Activated B cell treated with CpG ODN at 0.5 μM for 24 hours (primary cell): ENCODE measurements at regions of chr4 and their contacts with region 1.

Region 1: GRCh38 chr4:6986781-6987587 is 56.2 kb upstream of the TADA2B start:
- DNase-seq: peak; percentile 90
- ATAC-seq: peak; percentile 92
- H3K4me3 Mint-ChIP-seq: peak overlapping the region; percentile 94
- H3K27ac Mint-ChIP-seq: peak overlapping the region; percentile 98
- H3K4me1 Mint-ChIP-seq: peaks cover 74% of the 10 kb centered on the region
- H3K27me3 Mint-ChIP-seq: no peaks in the 10 kb centered on the region
- CTCF ChIP-seq: no peak

Region 2: GRCh38 chr4:5588046-5588445 is 1398.9 kb before region 1 on chr4:
- CTCF ChIA-PET with region 1: no interaction called
- POLR2A ChIA-PET with region 1: no interaction called
- intact Hi-C with region 1: no loop called
- DNase-seq: no peak
- ATAC-seq: no peak
- H3K4me3 Mint-ChIP-seq: no peak overlapping the region
- H3K27ac Mint-ChIP-seq: no peak overlapping the region
- H3K4me1 Mint-ChIP-seq: no peaks in the 10 kb centered on the region
- H3K27me3 Mint-ChIP-seq: no peaks in the 10 kb centered on the region
- CTCF ChIP-seq: no peak

Region 3: DNA sequence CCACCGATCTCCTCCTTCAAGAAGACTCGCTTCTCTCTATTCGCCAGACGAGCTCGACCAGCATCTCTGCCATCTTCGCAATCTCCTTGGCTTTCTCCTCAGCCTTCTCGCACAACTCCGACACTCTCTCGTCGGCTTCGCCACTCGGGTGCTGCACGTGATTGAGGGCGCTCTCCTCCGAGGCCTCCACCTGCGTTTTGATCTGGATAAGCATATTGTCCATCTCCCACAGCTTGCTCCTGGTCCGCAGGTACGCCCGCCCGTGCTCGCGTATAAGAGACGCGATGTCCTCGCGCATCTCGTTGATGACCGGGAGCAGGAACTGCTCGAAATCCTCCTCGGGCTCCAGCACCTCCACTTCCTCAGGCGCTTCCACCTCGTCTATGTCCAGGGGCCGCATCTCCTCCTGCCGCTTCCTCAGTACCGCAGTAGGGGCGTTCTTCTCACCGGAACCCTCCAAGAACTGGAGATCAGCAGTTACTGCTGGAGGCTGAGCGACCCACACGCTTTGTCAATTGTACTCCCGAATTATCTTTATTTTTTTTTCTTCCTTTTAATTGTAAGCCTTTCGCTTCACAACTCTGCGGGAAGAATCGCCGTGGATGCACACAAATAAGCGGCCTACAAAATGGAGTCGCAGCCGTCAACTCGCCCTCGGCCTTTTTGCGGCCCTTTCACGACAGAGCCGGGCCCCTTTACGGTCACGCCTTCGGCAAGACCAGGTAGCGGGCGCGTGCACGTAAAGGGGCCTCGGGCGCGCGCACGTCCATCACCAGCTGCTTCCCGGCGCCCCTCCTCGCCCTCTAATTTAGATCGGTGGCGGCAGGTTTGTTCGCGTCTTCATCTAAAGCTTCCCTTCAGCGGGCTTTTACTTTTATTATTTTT is 277.5 kb before region 1 on chr4 and contains the start of gene MRFAP1L1:
- CTCF ChIA-PET with region 1: no interaction called
- POLR2A ChIA-PET with region 1: no interaction called
- intact Hi-C with region 1: loop called (anchors 2 kb)
- DNase-seq: peak; percentile 93
- ATAC-seq: peak; percentile 84
- H3K4me3 Mint-ChIP-seq: peak within 1 kb of the TSS; percentile 99
- H3K27ac Mint-ChIP-seq: peak within 1 kb of the TSS; percentile 96
- H3K4me1 Mint-ChIP-seq: peaks cover 64% of the 10 kb centered on the region
- H3K27me3 Mint-ChIP-seq: peaks cover 3% of the 10 kb centered on the region
- CTCF ChIP-seq: no peak
- total RNA-seq, gene MRFAP1L1: 39.1 and 39.5 TPM in 2 replicates

Region 4: DNA sequence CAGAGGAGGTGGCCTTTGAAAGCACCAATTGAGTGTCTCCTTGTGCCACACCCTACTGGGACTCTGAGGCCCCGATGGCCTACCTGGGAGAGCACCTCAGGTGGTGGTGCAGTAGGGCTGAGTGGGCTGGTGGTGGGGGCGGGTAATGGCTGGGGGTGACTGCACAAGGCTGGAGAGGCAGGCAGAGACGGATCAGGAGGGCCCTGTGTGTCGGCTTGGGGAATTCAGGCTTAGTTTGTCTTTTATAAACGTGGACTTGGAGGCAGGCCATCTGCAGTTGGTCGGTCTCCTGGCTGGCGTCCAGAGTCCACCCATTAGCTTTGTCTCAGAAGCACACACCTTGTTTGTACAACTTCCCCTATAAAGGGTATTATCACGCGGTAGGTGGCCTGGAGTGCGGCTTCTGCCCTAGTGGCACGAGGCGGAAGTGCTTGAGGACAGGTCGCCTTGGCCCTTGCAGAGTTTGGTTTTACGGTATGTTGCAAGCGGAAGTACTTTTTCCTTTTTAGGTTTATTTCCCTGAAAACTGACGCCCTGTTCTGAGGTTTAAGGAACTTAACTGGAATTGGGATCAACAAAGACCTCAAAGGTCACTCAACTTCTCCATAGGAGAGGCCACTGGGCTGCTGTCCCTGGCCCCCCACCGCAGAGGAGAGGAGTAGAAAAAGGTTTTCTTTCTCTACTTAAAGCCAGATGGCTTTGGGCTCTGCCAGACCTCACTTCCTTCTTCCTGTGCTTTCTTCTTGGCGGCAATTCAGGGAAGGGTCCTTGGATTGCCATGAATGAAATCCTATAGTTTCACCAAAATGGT is 69.3 kb before region 1 on chr4:
- CTCF ChIA-PET with region 1: no interaction called
- POLR2A ChIA-PET with region 1: interaction called, 16 read pairs
- intact Hi-C with region 1: loop called (anchors 2 kb)
- DNase-seq: peak; percentile 34
- ATAC-seq: peak; percentile 91
- H3K4me3 Mint-ChIP-seq: peak overlapping the region; percentile 53
- H3K27ac Mint-ChIP-seq: peak overlapping the region; percentile 76
- H3K4me1 Mint-ChIP-seq: peaks cover 44% of the 10 kb centered on the region
- H3K27me3 Mint-ChIP-seq: no peaks in the 10 kb centered on the region
- CTCF ChIP-seq: no peak

Region 5: DNA sequence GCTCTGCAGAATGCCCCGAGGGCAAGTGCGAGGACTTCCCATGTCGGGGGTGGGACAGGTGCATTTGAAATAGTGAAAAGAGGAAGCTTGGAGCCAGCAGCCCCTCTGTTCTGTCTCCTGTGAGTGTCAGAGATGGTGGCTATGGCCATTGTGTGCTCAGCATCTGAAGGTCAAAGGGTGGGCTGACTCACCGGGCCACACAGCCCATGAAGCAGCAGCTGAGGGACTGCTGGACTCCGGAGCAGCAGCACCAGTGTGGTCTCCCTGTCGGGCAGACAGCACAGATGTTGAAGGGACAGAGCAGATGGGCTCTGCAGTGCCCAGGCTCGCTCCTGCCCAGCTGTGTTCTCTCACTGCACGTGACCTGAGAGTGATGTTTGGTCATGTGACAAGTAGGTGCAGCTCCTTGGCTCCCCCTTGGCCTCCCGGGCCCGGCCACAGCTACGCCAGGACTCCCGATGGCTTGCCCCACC is 23.8 kb before region 1 on chr4:
- CTCF ChIA-PET with region 1: interaction called, 3 read pairs
- POLR2A ChIA-PET with region 1: interaction called, 9 read pairs
- intact Hi-C with region 1: loop called (anchors 1 kb)
- DNase-seq: no peak
- ATAC-seq: peak; percentile 28
- H3K4me3 Mint-ChIP-seq: peak overlapping the region; percentile 83
- H3K27ac Mint-ChIP-seq: peak overlapping the region; percentile 87
- H3K4me1 Mint-ChIP-seq: peaks cover 51% of the 10 kb centered on the region
- H3K27me3 Mint-ChIP-seq: no peaks in the 10 kb centered on the region
- CTCF ChIP-seq: no peak

Region 6: DNA sequence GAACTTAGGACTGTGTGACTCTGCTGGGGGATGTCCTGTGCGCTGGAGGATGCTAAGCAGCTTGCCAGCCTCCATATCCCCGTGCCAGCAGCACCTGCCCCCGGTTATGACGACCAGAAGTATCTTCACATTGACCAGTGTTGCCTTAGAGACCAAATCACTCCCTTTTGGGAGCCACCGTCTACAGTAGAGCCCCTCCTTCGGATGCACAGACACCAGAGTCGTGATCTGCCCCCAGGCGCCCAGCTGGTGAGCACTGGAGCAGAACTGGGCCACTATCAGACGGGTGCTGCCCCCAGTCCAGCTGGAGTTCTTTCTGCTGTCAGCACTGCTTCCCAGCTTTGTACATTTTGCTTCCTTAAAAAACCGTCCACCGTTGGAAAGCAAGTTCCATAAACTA is 26.2 kb after region 1 on chr4:
- CTCF ChIA-PET with region 1: no interaction called
- POLR2A ChIA-PET with region 1: interaction called, 12 read pairs
- intact Hi-C with region 1: loop called (anchors 1 kb)
- DNase-seq: no peak
- ATAC-seq: peak; percentile 60
- H3K4me3 Mint-ChIP-seq: no peak overlapping the region
- H3K27ac Mint-ChIP-seq: peak overlapping the region; percentile 67
- H3K4me1 Mint-ChIP-seq: peaks cover 20% of the 10 kb centered on the region
- H3K27me3 Mint-ChIP-seq: no peaks in the 10 kb centered on the region
- CTCF ChIP-seq: no peak

Region 7: GRCh38 chr4:7736436-7737269 is 749.7 kb after region 1 on chr4:
- CTCF ChIA-PET with region 1: no interaction called
- POLR2A ChIA-PET with region 1: no interaction called
- intact Hi-C with region 1: no loop called
- DNase-seq: no peak
- ATAC-seq: no peak
- H3K4me3 Mint-ChIP-seq: no peak overlapping the region
- H3K27ac Mint-ChIP-seq: no peak overlapping the region
- H3K4me1 Mint-ChIP-seq: no peaks in the 10 kb centered on the region
- H3K27me3 Mint-ChIP-seq: no peaks in the 10 kb centered on the region
- CTCF ChIP-seq: no peak